ENCODE measurements at regions of chr5 and their contacts with region 1.

Region 1: GRCh38 chr5:90932052-90932699 is 373.6 kb downstream of the ADGRV1 start:
- DNase-seq: peak; percentile 47 to 80
- ATAC-seq: peak; percentile 77 to 93
- H3K4me3 ChIP-seq: no peak overlapping the region
- H3K27ac ChIP-seq: peak overlapping the region; percentile 72 to 82
- H3K4me1 ChIP-seq: peaks cover 33% of the 10 kb centered on the region
- CTCF ChIP-seq: peak; percentile 94
- EP300 ChIP-seq: no peak
- POLR2A ChIP-seq: no peak
- RAD21 ChIP-seq: peak; percentile 96 to 98

Region 2: GRCh38 chr5:90518661-90519060 is 413.5 kb before region 1 on chr5:
- CTCF ChIA-PET with region 1: no interaction called
- POLR2A ChIA-PET with region 1: no interaction called
- DNase-seq: peak in 1 of 2 experiments; percentile 3
- ATAC-seq: peak; percentile 13 to 21; a peak in 2 of 6 replicates
- H3K4me3 ChIP-seq: no peak overlapping the region
- H3K27ac ChIP-seq: peak overlapping the region in 1 of 2 experiments; percentile 25; a peak in 1 of 6 replicates
- H3K4me1 ChIP-seq: peaks cover 17% of the 10 kb centered on the region; the same call in 1 of the 3 replicates
- CTCF ChIP-seq: no peak
- EP300 ChIP-seq: no peak
- POLR2A ChIP-seq: no peak
- RAD21 ChIP-seq: no peak

Region 3: GRCh38 chr5:90802474-90803317 is 129.5 kb before region 1 on chr5:
- CTCF ChIA-PET with region 1: no interaction called
- POLR2A ChIA-PET with region 1: no interaction called
- DNase-seq: peak; percentile 37 to 60
- ATAC-seq: peak; percentile 79 to 92; a peak in 5 of 6 replicates
- H3K4me3 ChIP-seq: no peak overlapping the region
- H3K27ac ChIP-seq: no peak overlapping the region
- H3K4me1 ChIP-seq: no peaks in the 10 kb centered on the region
- CTCF ChIP-seq: peak; percentile 70
- EP300 ChIP-seq: no peak
- POLR2A ChIP-seq: no peak
- RAD21 ChIP-seq: peak; percentile 51 to 52; a peak in 4 of 5 replicates

Region 4: GRCh38 chr5:90881626-90882150 is 50.5 kb before region 1 on chr5:
- CTCF ChIA-PET with region 1: interaction called, 12 read pairs
- POLR2A ChIA-PET with region 1: no interaction called
- DNase-seq: no peak
- ATAC-seq: no peak
- H3K4me3 ChIP-seq: no peak overlapping the region
- H3K27ac ChIP-seq: no peak overlapping the region; a peak in 1 of 6 replicates
- H3K4me1 ChIP-seq: peaks cover 23% of the 10 kb centered on the region
- CTCF ChIP-seq: no peak
- EP300 ChIP-seq: no peak
- POLR2A ChIP-seq: no peak
- RAD21 ChIP-seq: no peak

Region 5: DNA sequence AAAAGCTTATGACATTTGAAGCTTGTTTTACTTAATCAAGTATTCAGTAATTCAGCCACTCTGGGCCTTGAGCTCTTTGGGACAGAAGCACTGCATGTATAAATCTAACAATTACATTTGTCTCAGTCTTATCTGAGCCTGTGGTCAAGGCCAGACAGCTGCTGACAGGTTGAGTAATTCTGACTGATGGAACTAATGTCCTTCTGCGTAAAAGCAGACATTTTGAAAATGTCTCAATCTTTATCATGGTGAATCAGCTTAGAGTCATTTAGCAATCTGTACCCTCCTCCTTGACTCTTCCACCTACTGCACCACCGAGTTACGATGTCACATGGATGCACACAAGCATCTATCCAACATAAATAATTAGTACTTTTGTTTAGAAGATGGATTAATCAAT is 51.0 kb after region 1 on chr5:
- CTCF ChIA-PET with region 1: interaction called, 24 read pairs
- POLR2A ChIA-PET with region 1: interaction called, 12 read pairs
- DNase-seq: peak; percentile 51 to 95
- ATAC-seq: peak; percentile 92 to 97
- H3K4me3 ChIP-seq: no peak overlapping the region
- H3K27ac ChIP-seq: peak overlapping the region; percentile 85 to 91
- H3K4me1 ChIP-seq: peaks cover 38% of the 10 kb centered on the region
- CTCF ChIP-seq: no peak
- EP300 ChIP-seq: peak; percentile 97
- POLR2A ChIP-seq: no peak
- RAD21 ChIP-seq: peak; percentile 50 to 67

Region 6: GRCh38 chr5:91049800-91050199 is 117.6 kb after region 1 on chr5:
- CTCF ChIA-PET with region 1: interaction called, 10 read pairs
- POLR2A ChIA-PET with region 1: no interaction called
- DNase-seq: peak; percentile 37 to 54
- ATAC-seq: peak in 1 of 2 experiments; percentile 85; a peak in 4 of 6 replicates
- H3K4me3 ChIP-seq: no peak overlapping the region
- H3K27ac ChIP-seq: peak overlapping the region; percentile 73 to 81
- H3K4me1 ChIP-seq: peaks cover 43% of the 10 kb centered on the region
- CTCF ChIP-seq: no peak
- EP300 ChIP-seq: peak in 1 of 2 experiments; percentile 28; a peak in 2 of 5 replicates
- POLR2A ChIP-seq: no peak
- RAD21 ChIP-seq: peak; percentile 19 to 36; a peak in 3 of 5 replicates

Region 7: DNA sequence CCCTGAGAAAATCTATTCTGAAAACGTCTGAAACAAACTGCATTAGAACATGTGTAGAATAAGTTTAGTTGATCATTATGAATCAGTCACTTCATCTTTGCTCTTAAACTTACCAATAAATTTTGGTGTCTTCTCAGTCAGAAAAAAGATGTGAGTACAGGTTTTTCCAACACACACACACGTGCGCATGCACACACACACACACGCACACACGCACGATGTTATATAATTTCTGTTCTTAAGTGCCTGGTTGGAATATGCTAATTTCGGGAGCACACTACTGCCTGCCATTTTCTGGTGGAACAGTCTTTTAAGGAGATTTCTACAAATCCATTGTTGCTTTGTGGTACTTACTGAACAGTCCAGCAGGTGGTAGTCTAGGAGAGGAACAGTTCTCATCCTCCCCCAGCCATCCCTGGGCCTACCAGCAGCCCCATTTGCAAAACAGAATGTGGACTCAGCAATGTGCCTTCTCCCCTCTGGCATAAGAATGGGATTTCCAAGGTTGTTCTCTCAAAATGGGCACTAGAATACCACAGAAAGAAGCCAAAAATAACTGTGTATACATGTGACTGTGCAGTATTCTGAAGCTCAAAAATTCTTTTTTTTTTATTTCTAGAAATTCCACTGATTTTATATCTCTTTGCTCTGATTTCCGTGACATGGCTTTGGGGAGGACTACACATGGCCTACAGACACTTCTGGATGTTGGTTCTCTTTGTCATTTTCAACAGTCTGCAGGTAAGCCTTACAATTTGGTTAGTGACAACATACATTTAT is 169.6 kb after region 1 on chr5:
- CTCF ChIA-PET with region 1: interaction called, 12 read pairs
- POLR2A ChIA-PET with region 1: no interaction called
- DNase-seq: peak; percentile 65 to 88
- ATAC-seq: peak; percentile 99
- H3K4me3 ChIP-seq: no peak overlapping the region
- H3K27ac ChIP-seq: peak overlapping the region; percentile 32 to 78
- H3K4me1 ChIP-seq: peaks cover 8% of the 10 kb centered on the region; the same call in 2 of the 3 replicates
- CTCF ChIP-seq: peak; percentile 93
- EP300 ChIP-seq: no peak
- POLR2A ChIP-seq: no peak
- RAD21 ChIP-seq: peak; percentile 97 to 98

Measured in A549 (cell line).